Mammary epithelial cell (primary cell): ENCODE measurements at regions of chr19 and their contacts with region 1.

Region 1: GRCh38 chr19:1020868-1021425 is at the start of gene TMEM259:
- DNase-seq: peak; percentile 95
- H3K4me3 ChIP-seq: peak within 1 kb of the TSS; percentile 72 to 94 (median 92)
- H3K27ac ChIP-seq: peak within 1 kb of the TSS; percentile 95
- H3K4me1 ChIP-seq: peaks cover 41% of the 10 kb centered on the region
- H3K27me3 ChIP-seq: no peaks in the 10 kb centered on the region
- CTCF ChIP-seq: no peak
- total RNA-seq, gene TMEM259: 104 to 152 TPM

Region 2: GRCh38 chr19:1064661-1065605 is 44.0 kb after region 1 on chr19:
- CTCF ChIA-PET with region 1: no interaction called
- dilution Hi-C with region 1: loop called (anchors 5 kb)
- in situ Hi-C with region 1: no loop called
- intact Hi-C with region 1: no loop called
- DNase-seq: peak; percentile 52
- H3K4me3 ChIP-seq: no peak overlapping the region
- H3K27ac ChIP-seq: no peak overlapping the region
- H3K4me1 ChIP-seq: peaks cover 30% of the 10 kb centered on the region
- H3K27me3 ChIP-seq: no peaks in the 10 kb centered on the region
- CTCF ChIP-seq: peak; percentile 55 to 71

Region 3: DNA sequence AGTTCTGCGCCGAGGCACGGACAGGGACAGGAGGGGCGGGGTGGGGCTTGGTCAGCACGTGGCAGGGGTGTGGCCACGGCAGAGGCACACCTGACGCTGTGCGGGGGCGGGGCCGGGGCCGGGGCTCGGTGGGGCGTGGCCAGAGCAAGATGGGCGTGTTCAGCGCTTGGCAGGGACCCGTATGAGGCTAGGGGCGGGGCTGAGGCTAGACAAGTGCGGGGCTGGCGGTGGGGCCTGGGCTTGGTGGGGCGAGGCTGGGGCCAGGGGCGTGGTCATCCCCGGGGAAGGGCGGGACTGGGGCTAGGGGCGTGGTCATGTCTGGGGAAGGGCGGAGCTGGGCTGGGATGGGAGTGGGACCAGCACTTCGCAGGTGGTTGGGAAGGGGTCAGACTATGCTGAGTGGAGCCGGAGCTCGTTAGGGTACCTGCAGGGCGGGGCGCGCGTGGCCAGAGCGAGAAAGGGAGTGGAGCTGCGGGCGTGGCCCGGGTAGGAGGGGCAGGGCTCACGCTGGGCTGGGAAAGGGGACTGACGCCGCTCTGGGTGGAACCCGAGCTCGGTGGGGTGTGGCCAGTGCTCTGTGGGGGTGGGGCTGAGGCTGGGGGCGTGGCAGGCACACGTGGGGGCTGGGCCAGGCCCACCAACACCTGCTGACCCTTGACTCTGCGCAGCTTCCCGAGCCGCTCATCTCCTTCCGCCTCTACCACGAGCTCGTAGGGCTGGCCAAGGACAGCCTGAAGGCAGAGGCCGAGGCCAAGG is 61.4 kb after region 1 on chr19:
- CTCF ChIA-PET with region 1: no interaction called
- dilution Hi-C with region 1: no loop called
- in situ Hi-C with region 1: no loop called
- intact Hi-C with region 1: loop called (anchors 1 kb)
- DNase-seq: peak; percentile 68
- H3K4me3 ChIP-seq: peak overlapping the region in 2 of 3 experiments; percentile 46
- H3K27ac ChIP-seq: no peak overlapping the region
- H3K4me1 ChIP-seq: peaks cover 15% of the 10 kb centered on the region
- H3K27me3 ChIP-seq: no peaks in the 10 kb centered on the region
- CTCF ChIP-seq: no peak

Region 4: GRCh38 chr19:1094975-1095701 is 74.2 kb after region 1 on chr19 and contains the start of gene POLR2E:
- CTCF ChIA-PET with region 1: no interaction called
- dilution Hi-C with region 1: no loop called
- in situ Hi-C with region 1: no loop called
- intact Hi-C with region 1: loop called (anchors 2 kb)
- DNase-seq: peak; percentile 95
- H3K4me3 ChIP-seq: peak within 1 kb of the TSS; percentile 98 to 100 (median 100)
- H3K27ac ChIP-seq: peak within 1 kb of the TSS; percentile 74
- H3K4me1 ChIP-seq: peaks cover 22% of the 10 kb centered on the region
- H3K27me3 ChIP-seq: no peaks in the 10 kb centered on the region
- CTCF ChIP-seq: no peak
- total RNA-seq, gene POLR2E: 63.7 to 233 TPM

Region 5: DNA sequence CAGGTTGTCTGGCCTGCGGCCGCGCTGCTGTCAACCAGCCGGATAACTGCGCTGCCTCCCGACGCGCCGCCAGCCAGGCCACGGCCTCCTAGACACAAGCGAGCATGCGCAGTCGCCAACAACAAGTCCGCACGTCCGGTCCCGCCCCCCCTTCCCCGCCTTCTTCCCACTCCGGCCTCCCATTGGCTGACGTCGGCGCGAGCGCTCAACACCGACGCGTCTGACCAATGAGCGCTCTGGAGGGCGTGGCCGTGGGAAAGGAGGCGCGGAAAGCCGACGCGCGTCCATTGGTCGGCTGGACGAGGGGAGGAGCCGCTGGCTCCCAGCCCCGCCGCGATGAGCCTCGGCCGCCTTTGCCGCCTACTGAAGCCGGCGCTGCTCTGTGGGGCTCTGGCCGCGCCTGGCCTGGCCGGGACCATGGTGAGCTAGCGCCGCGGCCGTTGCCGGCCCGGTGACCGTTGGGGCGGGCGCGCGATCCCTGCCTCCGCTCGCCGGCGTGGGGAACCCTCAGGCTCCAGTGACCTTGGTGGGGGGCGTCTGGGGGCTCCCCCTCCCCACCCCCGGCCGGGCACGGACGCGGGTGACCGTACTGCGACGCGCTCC is 82.9 kb after region 1 on chr19 and contains the start of gene GPX4:
- CTCF ChIA-PET with region 1: no interaction called
- dilution Hi-C with region 1: no loop called
- in situ Hi-C with region 1: no loop called
- intact Hi-C with region 1: loop called (anchors 2 kb)
- DNase-seq: peak; percentile 99
- H3K4me3 ChIP-seq: peak within 1 kb of the TSS; percentile 71 to 75 (median 74)
- H3K27ac ChIP-seq: peak within 1 kb of the TSS; percentile 79
- H3K4me1 ChIP-seq: peaks cover 47% of the 10 kb centered on the region
- H3K27me3 ChIP-seq: no peaks in the 10 kb centered on the region
- CTCF ChIP-seq: no peak
- total RNA-seq, gene GPX4: 154 to 216 TPM

Region 6: GRCh38 chr19:1183534-1184172 is 162.7 kb after region 1 on chr19:
- CTCF ChIA-PET with region 1: no interaction called
- dilution Hi-C with region 1: no loop called
- in situ Hi-C with region 1: no loop called
- intact Hi-C with region 1: loop called (anchors 5 kb)
- DNase-seq: peak; percentile 92
- H3K4me3 ChIP-seq: no peak overlapping the region
- H3K27ac ChIP-seq: peak overlapping the region; percentile 63
- H3K4me1 ChIP-seq: peaks cover 39% of the 10 kb centered on the region
- H3K27me3 ChIP-seq: no peaks in the 10 kb centered on the region
- CTCF ChIP-seq: no peak